Panc1 (cell line): ENCODE measurements at regions of chr15 and their contacts with region 1.

Region 1: GRCh38 chr15:66851226-66852071 is 149.4 kb downstream of the SMAD6 start:
- DNase-seq: no peak
- ATAC-seq: peak; percentile 86
- H3K4me3 ChIP-seq: peak overlapping the region in 1 of 2 experiments; percentile 7; a peak in 1 of 4 replicates
- H3K27ac ChIP-seq: peak overlapping the region; percentile 93
- H3K4me1 ChIP-seq: peaks cover 56% of the 10 kb centered on the region
- H3K27me3 ChIP-seq: no peaks in the 10 kb centered on the region
- CTCF ChIP-seq: peak; percentile 99

Region 2: GRCh38 chr15:66603301-66604179 is 247.9 kb before region 1 on chr15:
- CTCF ChIA-PET with region 1: interaction called, 11 read pairs
- POLR2A ChIA-PET with region 1: no interaction called
- in situ Hi-C with region 1: no loop called
- intact Hi-C with region 1: loop called (anchors 2 kb)
- DNase-seq: peak; percentile 27
- ATAC-seq: peak; percentile 87
- H3K4me3 ChIP-seq: no peak overlapping the region
- H3K27ac ChIP-seq: no peak overlapping the region
- H3K4me1 ChIP-seq: no peaks in the 10 kb centered on the region
- H3K27me3 ChIP-seq: no peaks in the 10 kb centered on the region
- CTCF ChIP-seq: peak; percentile 94

Region 3: DNA sequence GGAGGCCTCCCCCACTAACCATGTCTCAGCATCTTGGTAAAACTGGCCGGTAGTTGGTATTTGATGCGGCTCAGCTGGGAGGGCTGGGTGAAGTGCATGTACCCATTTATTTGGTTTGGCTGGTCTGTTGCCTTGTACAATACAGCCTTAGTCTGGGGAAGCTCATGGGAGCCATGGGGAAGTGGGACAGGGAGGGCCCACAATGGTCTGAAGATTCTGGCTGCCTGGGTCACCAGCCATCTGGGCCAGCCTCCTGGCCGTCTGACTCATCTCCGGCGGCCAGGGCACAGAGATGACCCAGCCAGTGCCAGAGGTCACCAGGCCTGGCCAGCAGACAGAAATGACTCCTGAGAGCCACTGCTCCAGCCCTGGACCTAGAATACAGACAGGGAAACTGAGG is 201.0 kb before region 1 on chr15:
- CTCF ChIA-PET with region 1: no interaction called
- POLR2A ChIA-PET with region 1: no interaction called
- in situ Hi-C with region 1: no loop called
- intact Hi-C with region 1: no loop called
- DNase-seq: no peak
- ATAC-seq: peak; percentile 43; the same call in 1 of the 2 replicates
- H3K4me3 ChIP-seq: no peak overlapping the region
- H3K27ac ChIP-seq: no peak overlapping the region
- H3K4me1 ChIP-seq: peaks cover 21% of the 10 kb centered on the region
- H3K27me3 ChIP-seq: no peaks in the 10 kb centered on the region
- CTCF ChIP-seq: no peak

Region 4: DNA sequence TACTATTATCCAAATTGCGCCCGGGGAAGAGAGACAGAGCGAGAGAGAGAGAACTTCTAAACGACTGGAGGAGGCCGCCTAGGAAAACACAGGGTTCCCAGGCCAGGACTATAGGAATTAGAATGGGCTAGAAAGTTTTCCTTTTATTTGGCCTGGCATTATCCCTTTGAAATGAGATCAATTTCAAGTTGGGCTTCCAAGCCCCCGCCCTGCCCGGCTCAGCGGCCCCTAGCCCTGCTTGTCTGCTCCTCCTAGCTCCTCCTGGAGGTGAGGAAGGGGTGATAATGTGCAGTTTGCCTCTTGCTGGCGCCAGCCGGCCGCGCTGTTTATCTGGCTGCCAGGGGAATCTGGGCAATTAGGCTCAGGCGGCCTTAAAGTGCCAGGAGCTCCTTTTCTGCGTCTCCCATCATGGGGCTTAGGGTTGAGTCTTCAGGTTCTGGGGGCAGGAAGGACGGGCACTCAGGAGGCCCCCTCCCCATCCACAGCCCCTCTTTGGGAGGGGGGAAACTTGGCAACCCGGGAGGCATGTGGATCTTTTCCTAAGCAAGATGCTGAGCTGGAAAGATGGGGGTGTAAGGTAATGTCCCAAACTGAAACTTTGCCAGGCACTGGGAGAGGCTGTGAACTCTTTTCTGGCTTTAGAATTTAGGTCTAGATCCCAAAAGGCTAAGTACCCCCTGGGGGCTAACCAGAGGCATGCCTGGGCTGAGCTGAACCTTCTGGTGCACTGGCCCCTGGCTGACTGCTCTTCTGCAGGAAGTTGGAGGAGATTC is 144.0 kb before region 1 on chr15:
- CTCF ChIA-PET with region 1: interaction called, 9 read pairs
- POLR2A ChIA-PET with region 1: no interaction called
- in situ Hi-C with region 1: no loop called
- intact Hi-C with region 1: loop called (anchors 5 kb)
- DNase-seq: no peak
- ATAC-seq: peak; percentile 32
- H3K4me3 ChIP-seq: peak overlapping the region; percentile 91 to 97
- H3K27ac ChIP-seq: peak overlapping the region; percentile 94
- H3K4me1 ChIP-seq: peaks cover 80% of the 10 kb centered on the region
- H3K27me3 ChIP-seq: no peaks in the 10 kb centered on the region
- CTCF ChIP-seq: peak; percentile 56; the same call in 1 of the 2 replicates

Region 5: DNA sequence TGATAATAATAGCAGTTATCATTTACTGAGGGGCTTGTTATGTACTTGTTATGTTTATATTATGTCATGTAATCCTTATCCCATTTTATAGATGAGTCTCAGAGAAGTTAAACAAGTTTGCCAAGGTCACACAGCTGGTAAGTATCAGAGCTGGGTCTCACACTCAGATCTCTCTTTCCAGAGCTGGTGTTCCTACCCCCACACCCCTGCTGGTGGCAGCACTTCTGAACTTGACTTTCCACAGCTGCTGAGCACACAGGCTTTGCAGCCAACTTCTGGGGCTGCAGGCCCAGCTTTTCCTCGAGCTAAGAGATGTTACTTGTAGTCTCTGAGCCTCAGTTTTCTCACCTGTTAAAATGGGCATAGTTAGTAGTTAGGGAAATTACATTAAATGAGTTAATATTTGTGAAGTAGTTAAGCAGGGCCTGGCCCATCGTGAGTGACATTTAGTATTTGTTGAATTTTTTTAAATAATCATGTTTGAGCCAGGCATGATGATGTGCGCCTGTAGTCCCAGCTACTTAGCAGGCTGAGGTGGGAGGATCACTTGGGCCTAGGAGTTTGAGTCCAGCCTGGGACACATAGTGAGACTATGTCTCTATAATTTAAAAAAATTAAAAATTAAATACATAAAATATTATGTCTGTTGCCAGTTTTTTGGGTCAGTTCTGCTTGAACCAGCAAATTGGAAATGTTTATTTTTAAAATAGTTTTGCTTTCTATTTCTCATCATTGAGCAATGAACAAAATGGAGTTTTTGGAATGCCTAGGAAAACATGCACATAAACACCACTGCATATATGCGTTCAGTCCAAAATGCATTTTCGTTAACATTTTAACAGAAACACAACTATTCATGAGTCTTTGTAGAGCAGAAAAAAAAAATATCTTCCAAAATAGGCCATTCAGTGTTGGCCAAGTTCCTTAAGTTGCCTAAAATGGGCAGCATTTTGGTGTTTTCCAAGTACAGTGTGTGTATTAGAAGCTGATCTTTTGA is 62.1 kb before region 1 on chr15:
- CTCF ChIA-PET with region 1: interaction called, 11 read pairs
- POLR2A ChIA-PET with region 1: interaction called, 7 read pairs
- in situ Hi-C with region 1: no loop called
- intact Hi-C with region 1: loop called (anchors 5 kb)
- DNase-seq: no peak
- ATAC-seq: peak; percentile 86
- H3K4me3 ChIP-seq: no peak overlapping the region
- H3K27ac ChIP-seq: peak overlapping the region; percentile 71
- H3K4me1 ChIP-seq: peaks cover 35% of the 10 kb centered on the region
- H3K27me3 ChIP-seq: no peaks in the 10 kb centered on the region
- CTCF ChIP-seq: no peak; the same call in 1 of the 2 replicates

Region 6: GRCh38 chr15:66946578-66947164 is 95.2 kb after region 1 on chr15:
- CTCF ChIA-PET with region 1: interaction called, 11 read pairs
- POLR2A ChIA-PET with region 1: no interaction called
- in situ Hi-C with region 1: no loop called
- intact Hi-C with region 1: no loop called
- DNase-seq: peak; percentile 71
- ATAC-seq: peak; percentile 54
- H3K4me3 ChIP-seq: peak overlapping the region in 1 of 2 experiments; percentile 39; a peak in 2 of 4 replicates
- H3K27ac ChIP-seq: peak overlapping the region; percentile 100
- H3K4me1 ChIP-seq: peaks cover 62% of the 10 kb centered on the region
- H3K27me3 ChIP-seq: no peaks in the 10 kb centered on the region
- CTCF ChIP-seq: peak; percentile 91

Region 7: GRCh38 chr15:66966257-66966656 is 114.8 kb after region 1 on chr15:
- CTCF ChIA-PET with region 1: no interaction called
- POLR2A ChIA-PET with region 1: no interaction called
- in situ Hi-C with region 1: no loop called
- intact Hi-C with region 1: no loop called
- DNase-seq: no peak
- ATAC-seq: no peak
- H3K4me3 ChIP-seq: no peak overlapping the region
- H3K27ac ChIP-seq: no peak overlapping the region
- H3K4me1 ChIP-seq: peaks cover 3% of the 10 kb centered on the region
- H3K27me3 ChIP-seq: no peaks in the 10 kb centered on the region
- CTCF ChIP-seq: no peak

Region 8: GRCh38 chr15:67120839-67121643 is 269.6 kb after region 1 on chr15:
- CTCF ChIA-PET with region 1: interaction called, 10 read pairs
- POLR2A ChIA-PET with region 1: no interaction called
- in situ Hi-C with region 1: no loop called
- intact Hi-C with region 1: no loop called
- DNase-seq: no peak
- ATAC-seq: peak; percentile 22
- H3K4me3 ChIP-seq: no peak overlapping the region
- H3K27ac ChIP-seq: peak overlapping the region; percentile 100
- H3K4me1 ChIP-seq: peaks cover 97% of the 10 kb centered on the region
- H3K27me3 ChIP-seq: no peaks in the 10 kb centered on the region
- CTCF ChIP-seq: no peak